Activated naive CD4-positive, alpha-beta T cell treated with anti-CD3 and anti-CD28 coated beads for 36 hours (primary cell): ENCODE measurements at regions of chr2 and their contacts with region 1.

Region 1: GRCh38 chr2:178280244-178280852 is 86.0 kb downstream of the OSBPL6 start:
- DNase-seq: peak; percentile 64
- H3K4me3 Mint-ChIP-seq: no peak overlapping the region
- H3K27ac Mint-ChIP-seq: no peak overlapping the region
- H3K4me1 Mint-ChIP-seq: no peaks in the 10 kb centered on the region
- H3K27me3 Mint-ChIP-seq: peaks cover 18% of the 10 kb centered on the region

Region 2: GRCh38 chr2:177983183-177983788 is 297.1 kb before region 1 on chr2:
- CTCF ChIA-PET with region 1: no interaction called
- intact Hi-C with region 1: loop called (anchors 5 kb)
- DNase-seq: peak; percentile 39
- H3K4me3 Mint-ChIP-seq: no peak overlapping the region
- H3K27ac Mint-ChIP-seq: no peak overlapping the region
- H3K4me1 Mint-ChIP-seq: no peaks in the 10 kb centered on the region
- H3K27me3 Mint-ChIP-seq: peaks cover 5% of the 10 kb centered on the region

Region 3: DNA sequence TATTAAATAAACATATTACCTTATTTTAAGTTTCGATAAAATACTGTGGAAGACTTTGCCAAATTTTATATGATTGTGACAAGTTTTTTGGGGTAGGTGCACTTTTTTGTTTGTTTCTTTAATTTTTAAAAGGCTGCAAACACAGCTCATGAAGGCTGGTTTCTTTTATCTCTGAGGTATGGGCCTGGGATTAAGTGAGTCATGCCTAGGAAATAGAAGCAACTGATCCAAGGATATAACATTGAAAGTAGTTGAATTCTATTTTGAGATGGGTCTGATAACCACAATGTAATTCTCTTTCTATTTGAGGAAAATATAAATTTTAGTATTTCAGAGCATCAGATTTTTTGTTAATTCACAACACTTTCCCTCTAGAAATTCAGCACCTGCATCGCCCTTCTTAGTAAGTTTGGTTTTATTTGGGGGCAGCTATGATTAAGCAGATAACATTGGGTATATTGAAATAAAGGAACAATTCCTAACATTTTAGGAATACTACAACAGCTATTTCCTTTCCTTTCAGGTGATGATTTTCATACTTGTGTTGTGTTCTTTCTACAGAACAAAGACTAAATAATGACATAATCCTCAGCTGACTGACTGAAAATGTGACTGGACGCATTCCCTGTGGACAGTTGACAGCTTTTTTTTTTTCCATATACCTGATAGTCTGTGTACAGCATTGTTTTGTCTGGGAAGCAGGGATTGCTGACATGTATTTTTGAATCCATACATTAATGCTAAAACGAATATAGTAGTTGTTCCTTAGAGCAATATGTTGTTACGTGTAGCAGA is 151.3 kb before region 1 on chr2:
- CTCF ChIA-PET with region 1: interaction called, 3 read pairs
- intact Hi-C with region 1: loop called (anchors 1 kb)
- DNase-seq: no peak
- H3K4me3 Mint-ChIP-seq: no peak overlapping the region
- H3K27ac Mint-ChIP-seq: no peak overlapping the region
- H3K4me1 Mint-ChIP-seq: no peaks in the 10 kb centered on the region
- H3K27me3 Mint-ChIP-seq: no peaks in the 10 kb centered on the region

Region 4: DNA sequence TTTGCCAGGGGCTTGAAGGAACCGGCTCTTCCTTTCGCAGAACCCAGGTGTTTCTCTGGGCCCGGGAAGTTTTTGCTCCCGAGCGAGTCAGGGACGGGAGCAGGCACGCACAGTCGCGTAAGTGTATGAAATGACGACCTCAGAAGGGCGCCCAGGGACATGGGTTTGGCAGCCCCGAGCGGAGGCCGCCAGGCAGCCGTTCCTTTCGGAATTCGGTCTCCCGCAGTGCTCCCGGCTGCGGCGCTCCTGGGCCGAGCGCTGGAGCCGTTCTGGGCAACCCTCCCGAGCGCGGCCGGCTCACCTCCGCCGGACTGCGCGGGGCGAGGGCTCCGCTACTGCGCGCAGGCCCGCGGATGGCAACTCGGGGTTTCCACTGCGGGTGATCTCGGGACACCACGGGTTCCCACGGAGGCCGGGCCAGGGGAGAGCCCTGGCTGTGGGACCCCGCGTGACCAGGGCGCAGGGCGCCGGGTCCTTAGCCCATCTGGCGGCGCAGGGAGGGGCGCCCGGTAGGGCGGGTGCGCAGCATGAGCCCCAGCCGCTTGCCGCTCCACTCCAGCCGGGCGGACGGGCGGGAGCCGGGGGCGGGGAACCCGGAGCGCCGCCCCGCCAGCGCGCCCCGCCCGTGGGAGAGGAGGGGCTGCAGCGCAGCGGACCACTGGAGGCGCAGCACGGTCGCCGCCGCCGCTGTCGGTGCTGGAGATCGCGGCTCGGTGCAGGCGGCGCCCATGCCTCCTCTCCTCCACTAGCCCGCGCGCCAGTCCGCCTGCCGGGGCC is 86.3 kb before region 1 on chr2 and contains the start of gene OSBPL6:
- CTCF ChIA-PET with region 1: no interaction called
- intact Hi-C with region 1: loop called (anchors 2 kb)
- DNase-seq: peak; percentile 65
- H3K4me3 Mint-ChIP-seq: peak within 1 kb of the TSS; percentile 69
- H3K27ac Mint-ChIP-seq: no peak within 1 kb of the TSS
- H3K4me1 Mint-ChIP-seq: peaks cover 3% of the 10 kb centered on the region
- H3K27me3 Mint-ChIP-seq: peaks cover 51% of the 10 kb centered on the region
- total RNA-seq, gene OSBPL6: 1.9 to 2.3 TPM